GM12878 (cell line): ENCODE measurements at regions of chr16 and their contacts with region 1.

Region 1: DNA sequence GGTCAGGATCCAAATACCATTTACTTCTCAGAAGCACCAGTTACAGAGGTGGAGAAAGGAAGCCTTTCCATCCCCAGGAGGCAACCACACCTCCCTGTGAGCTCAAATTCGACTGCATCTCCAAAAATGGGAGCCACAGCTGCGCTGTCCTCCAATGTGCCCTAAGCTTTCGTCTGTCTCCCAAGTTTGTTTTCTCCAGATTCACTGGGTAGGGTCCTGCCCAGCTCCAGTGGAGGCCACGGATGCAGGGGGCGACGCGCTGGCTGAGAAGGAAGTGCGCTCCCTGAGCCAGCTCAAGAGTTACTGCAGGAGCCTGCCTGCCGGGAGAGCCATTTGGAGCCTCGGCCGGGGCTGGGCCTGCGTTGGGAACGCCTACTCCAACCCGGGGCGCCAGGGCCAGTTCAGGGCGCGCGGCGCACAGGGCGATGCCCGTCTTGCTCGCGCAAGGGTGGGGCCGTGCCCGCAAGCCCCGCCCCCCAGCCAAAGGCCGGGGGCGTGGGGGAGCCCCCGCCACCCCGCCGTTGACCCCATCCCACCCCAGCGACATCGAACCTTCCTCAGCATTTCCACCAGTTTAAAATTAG is 19.5 kb downstream of the SIAH1 start:
- DNase-seq: no peak
- ATAC-seq: peak; percentile 97
- H3K4me3 ChIP-seq: peak overlapping the region; percentile 64
- H3K27ac ChIP-seq: peak overlapping the region; percentile 90
- H3K4me1 ChIP-seq: peaks cover 14% of the 10 kb centered on the region
- H3K27me3 ChIP-seq: no peaks in the 10 kb centered on the region
- CTCF ChIP-seq: no peak
- EP300 ChIP-seq: no peak
- POLR2A ChIP-seq: peak; percentile 73
- RAD21 ChIP-seq: no peak

Region 2: GRCh38 chr16:48378836-48379235 is 13.2 kb after region 1 on chr16:
- CTCF ChIA-PET with region 1: interaction called, 14 read pairs
- POLR2A ChIA-PET with region 1: interaction called, 9 read pairs
- RAD21 ChIA-PET with region 1: interaction called, 30 read pairs
- SMC1A ChIA-PET with region 1: interaction called, 112 read pairs
- in situ Hi-C with region 1: no loop called
- intact Hi-C with region 1: loop called (anchors 2 kb)
- DNase-seq: no peak
- ATAC-seq: peak; percentile 50
- H3K4me3 ChIP-seq: no peak overlapping the region
- H3K27ac ChIP-seq: no peak overlapping the region
- H3K4me1 ChIP-seq: peaks cover 4% of the 10 kb centered on the region
- H3K27me3 ChIP-seq: no peaks in the 10 kb centered on the region
- CTCF ChIP-seq: no peak
- EP300 ChIP-seq: no peak
- POLR2A ChIP-seq: no peak
- RAD21 ChIP-seq: no peak

Region 3: DNA sequence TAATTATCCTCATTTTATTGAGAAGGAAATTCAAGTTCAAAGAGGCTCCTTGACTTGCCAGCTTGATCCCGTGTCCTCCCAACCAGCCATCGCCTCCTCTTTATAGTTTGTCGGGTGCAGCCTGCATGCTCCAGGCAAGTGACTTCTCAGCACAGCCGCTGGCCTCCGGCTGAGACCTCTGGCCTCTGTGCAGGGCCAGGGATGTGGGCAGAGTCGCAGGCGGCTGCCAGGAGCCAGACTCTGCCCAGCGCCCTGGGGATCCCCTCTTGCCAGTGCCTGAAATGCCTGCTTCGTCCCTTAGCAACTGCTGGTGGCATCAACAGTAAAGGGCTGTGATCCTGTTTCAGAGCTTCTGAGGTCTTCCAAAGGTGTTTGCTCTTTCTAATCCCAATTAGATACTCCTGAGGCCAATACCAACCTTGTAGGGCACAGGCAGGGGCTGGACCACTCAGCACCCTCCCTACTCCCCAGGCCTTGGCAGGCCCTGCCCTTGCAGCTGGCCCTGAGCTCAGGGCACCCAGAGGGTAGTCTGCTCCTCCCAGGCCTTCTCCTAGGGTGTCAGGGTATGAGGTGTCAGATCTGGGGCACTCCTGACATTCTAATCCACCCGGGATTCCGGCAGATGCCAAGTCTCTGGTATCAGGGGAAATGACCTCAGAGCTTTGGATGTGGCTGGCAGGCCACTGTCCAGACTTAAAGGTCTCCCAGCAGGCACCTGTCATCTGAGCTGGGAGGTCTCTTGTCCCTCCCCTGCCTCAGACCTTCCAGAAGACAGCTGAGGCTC is 87.5 kb after region 1 on chr16:
- CTCF ChIA-PET with region 1: interaction called, 4 read pairs
- POLR2A ChIA-PET with region 1: no interaction called
- RAD21 ChIA-PET with region 1: interaction called, 14 read pairs
- SMC1A ChIA-PET with region 1: interaction called, 4 read pairs
- in situ Hi-C with region 1: no loop called
- intact Hi-C with region 1: loop called (anchors 5 kb)
- DNase-seq: no peak
- ATAC-seq: no peak
- H3K4me3 ChIP-seq: no peak overlapping the region
- H3K27ac ChIP-seq: no peak overlapping the region
- H3K4me1 ChIP-seq: peaks cover 18% of the 10 kb centered on the region
- H3K27me3 ChIP-seq: no peaks in the 10 kb centered on the region
- CTCF ChIP-seq: no peak
- EP300 ChIP-seq: no peak
- POLR2A ChIP-seq: no peak
- RAD21 ChIP-seq: no peak

Region 4: DNA sequence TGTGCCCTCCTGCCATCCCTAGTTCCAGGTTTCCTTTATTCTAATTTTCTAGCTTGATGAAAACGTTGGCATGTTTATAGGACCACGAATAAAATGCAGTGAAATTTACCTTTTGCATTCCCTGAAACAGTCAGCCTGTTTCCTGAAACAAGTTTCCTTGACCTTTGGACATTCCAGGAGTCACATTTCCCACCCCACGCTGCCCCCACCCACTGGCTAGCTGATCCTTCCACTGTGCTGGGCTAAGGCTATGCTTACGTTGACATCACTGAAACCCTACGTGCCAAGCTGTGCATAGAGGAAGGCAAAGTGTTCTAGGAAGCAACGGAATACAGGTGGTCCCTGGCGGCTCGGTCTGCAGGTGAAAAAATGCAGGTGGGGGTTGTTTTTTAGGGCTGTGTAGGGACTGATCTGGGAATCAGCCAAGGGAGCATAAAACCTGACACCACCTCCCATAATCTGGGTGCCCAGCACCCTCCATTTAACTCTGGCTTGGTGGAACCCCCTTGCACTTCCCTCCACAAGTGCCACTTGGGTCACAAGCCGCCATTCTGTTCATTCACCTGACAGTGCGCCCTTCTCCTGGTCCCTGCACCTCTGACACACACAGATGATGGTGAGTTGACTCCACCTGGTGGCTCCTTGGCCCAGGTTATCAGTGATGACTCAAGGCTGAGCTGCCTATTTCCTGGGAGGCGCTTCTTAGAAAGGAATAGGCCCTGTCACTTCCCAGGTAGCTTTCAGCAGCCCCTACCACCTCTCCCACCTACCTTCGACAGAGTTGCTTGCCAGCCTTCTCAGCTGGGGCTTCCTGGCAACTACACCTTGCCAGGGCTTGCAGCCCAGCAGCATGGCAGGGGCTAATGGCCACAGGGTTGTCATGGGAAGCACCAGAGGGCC is 160.6 kb after region 1 on chr16:
- CTCF ChIA-PET with region 1: interaction called, 17 read pairs
- POLR2A ChIA-PET with region 1: interaction called, 4 read pairs
- RAD21 ChIA-PET with region 1: interaction called, 12 read pairs
- SMC1A ChIA-PET with region 1: interaction called, 10 read pairs
- in situ Hi-C with region 1: no loop called
- intact Hi-C with region 1: no loop called
- DNase-seq: peak; percentile 40
- ATAC-seq: peak; percentile 94
- H3K4me3 ChIP-seq: no peak overlapping the region
- H3K27ac ChIP-seq: no peak overlapping the region
- H3K4me1 ChIP-seq: 0 out of 2 replicates have a peak, but pooled peaks cover 5% of the 10 kb centered on the region
- H3K27me3 ChIP-seq: no peaks in the 10 kb centered on the region
- CTCF ChIP-seq: peak; percentile 53 to 75 (median 54); a peak in 4 of 6 replicates
- EP300 ChIP-seq: no peak
- POLR2A ChIP-seq: no peak
- RAD21 ChIP-seq: peak; percentile 90

Region 5: GRCh38 chr16:48609652-48610029 is 244.0 kb after region 1 on chr16:
- CTCF ChIA-PET with region 1: interaction called, 3 read pairs
- POLR2A ChIA-PET with region 1: interaction called, 6 read pairs
- RAD21 ChIA-PET with region 1: interaction called, 3 read pairs
- SMC1A ChIA-PET with region 1: interaction called, 7 read pairs
- in situ Hi-C with region 1: no loop called
- intact Hi-C with region 1: loop called (anchors 1 kb)
- DNase-seq: no peak
- ATAC-seq: peak; percentile 46
- H3K4me3 ChIP-seq: peak overlapping the region; percentile 90
- H3K27ac ChIP-seq: peak overlapping the region; percentile 97
- H3K4me1 ChIP-seq: peaks cover 46% of the 10 kb centered on the region
- H3K27me3 ChIP-seq: no peaks in the 10 kb centered on the region
- CTCF ChIP-seq: no peak
- EP300 ChIP-seq: no peak
- POLR2A ChIP-seq: peak; percentile 75
- RAD21 ChIP-seq: no peak